ENCODE measurements at regions of chr1 and their contacts with region 1.

Region 1: GRCh38 chr1:87292684-87293493 is 35.8 kb upstream of the LMO4 start:
- DNase-seq: peak; percentile 65
- H3K4me3 Mint-ChIP-seq: no peak overlapping the region
- H3K27ac Mint-ChIP-seq: no peak overlapping the region
- H3K4me1 Mint-ChIP-seq: no peaks in the 10 kb centered on the region
- H3K27me3 Mint-ChIP-seq: no peaks in the 10 kb centered on the region
- CTCF ChIP-seq: peak; percentile 75

Region 2: GRCh38 chr1:88061492-88062177 is 768.7 kb after region 1 on chr1:
- CTCF ChIA-PET with region 1: no interaction called
- intact Hi-C with region 1: loop called (anchors 5 kb)
- DNase-seq: peak; percentile 69
- H3K4me3 Mint-ChIP-seq: no peak overlapping the region
- H3K27ac Mint-ChIP-seq: no peak overlapping the region
- H3K4me1 Mint-ChIP-seq: peaks cover 35% of the 10 kb centered on the region
- H3K27me3 Mint-ChIP-seq: no peaks in the 10 kb centered on the region
- CTCF ChIP-seq: peak; percentile 71

Region 3: GRCh38 chr1:88302843-88303486 is 1010.1 kb after region 1 on chr1:
- CTCF ChIA-PET with region 1: no interaction called
- intact Hi-C with region 1: loop called (anchors 2 kb)
- DNase-seq: peak; percentile 21
- H3K4me3 Mint-ChIP-seq: no peak overlapping the region
- H3K27ac Mint-ChIP-seq: no peak overlapping the region
- H3K4me1 Mint-ChIP-seq: no peaks in the 10 kb centered on the region
- H3K27me3 Mint-ChIP-seq: no peaks in the 10 kb centered on the region
- CTCF ChIP-seq: peak; percentile 47

Measured in Calu3 (cell line).